ENCODE measurements at regions of chr3 and their contacts with region 1.

Region 1: GRCh38 chr3:42061713-42062408 is 29.3 kb upstream of the TRAK1 start:
- DNase-seq: peak; percentile 87 to 91 (median 88)
- ATAC-seq: peak; percentile 94 to 95
- H3K4me3 ChIP-seq: no peak overlapping the region
- H3K27ac ChIP-seq: peak overlapping the region; percentile 97
- H3K4me1 ChIP-seq: peaks cover 18% of the 10 kb centered on the region
- H3K27me3 ChIP-seq: no peaks in the 10 kb centered on the region

Region 2: GRCh38 chr3:42024591-42025351 is 37.1 kb before region 1 on chr3:
- intact Hi-C with region 1: loop called in 1 of 4 experiments (anchors 5 kb)
- DNase-seq: no peak
- ATAC-seq: peak in 1 of 2 donors; percentile 35
- H3K4me3 ChIP-seq: no peak overlapping the region
- H3K27ac ChIP-seq: peak overlapping the region; percentile 94
- H3K4me1 ChIP-seq: peaks cover 7% of the 10 kb centered on the region
- H3K27me3 ChIP-seq: no peaks in the 10 kb centered on the region

Measured in right cardiac atrium (tissue), 5 donors.